Gastrocnemius medialis (tissue), 4 donors: ENCODE measurements at regions of chr14 and their contacts with region 1.

Region 1: DNA sequence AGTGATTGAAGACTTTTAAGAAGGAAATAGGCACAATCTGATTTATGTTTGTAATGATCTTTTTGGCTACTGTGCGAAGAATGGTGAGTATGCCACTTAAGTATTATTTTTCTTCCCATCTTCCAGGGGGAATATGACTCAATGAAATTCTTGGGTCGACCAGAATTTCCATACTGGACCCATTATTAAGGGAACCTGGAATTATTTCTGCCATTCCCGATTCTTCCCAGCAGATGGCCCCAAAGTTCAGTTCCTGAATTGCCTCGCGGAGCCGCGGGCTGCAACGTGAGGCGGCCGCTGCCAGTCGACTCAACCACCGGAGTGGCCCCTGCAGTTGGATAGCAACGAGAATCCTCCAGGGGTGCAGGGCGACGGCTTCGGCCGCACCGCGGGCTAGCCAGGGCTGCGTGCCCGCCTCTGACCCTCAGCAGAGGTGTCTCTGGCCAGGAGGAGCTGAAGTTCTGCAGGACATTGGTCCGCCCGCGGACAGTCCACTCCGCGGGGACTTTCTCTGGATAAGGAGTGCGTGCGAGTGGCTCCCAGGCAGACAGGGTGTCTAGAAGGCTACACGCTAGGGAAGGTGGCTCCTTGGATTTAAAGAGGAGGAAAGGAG is 628 bp upstream of the TSHR start:
- DNase-seq: peak; percentile 59 to 64
- ATAC-seq: peak; percentile 90 to 93
- H3K4me3 ChIP-seq: peak overlapping the region; percentile 61 to 72 (median 68)
- H3K27ac ChIP-seq: no peak overlapping the region
- H3K4me1 ChIP-seq: peaks cover 0 to 7% of the 10 kb centered on the region in 2 donors
- H3K27me3 ChIP-seq: no peaks in the 10 kb centered on the region
- CTCF ChIP-seq: peak; percentile 75 to 88 (median 85)
- POLR2A ChIP-seq: no peak

Region 2: DNA sequence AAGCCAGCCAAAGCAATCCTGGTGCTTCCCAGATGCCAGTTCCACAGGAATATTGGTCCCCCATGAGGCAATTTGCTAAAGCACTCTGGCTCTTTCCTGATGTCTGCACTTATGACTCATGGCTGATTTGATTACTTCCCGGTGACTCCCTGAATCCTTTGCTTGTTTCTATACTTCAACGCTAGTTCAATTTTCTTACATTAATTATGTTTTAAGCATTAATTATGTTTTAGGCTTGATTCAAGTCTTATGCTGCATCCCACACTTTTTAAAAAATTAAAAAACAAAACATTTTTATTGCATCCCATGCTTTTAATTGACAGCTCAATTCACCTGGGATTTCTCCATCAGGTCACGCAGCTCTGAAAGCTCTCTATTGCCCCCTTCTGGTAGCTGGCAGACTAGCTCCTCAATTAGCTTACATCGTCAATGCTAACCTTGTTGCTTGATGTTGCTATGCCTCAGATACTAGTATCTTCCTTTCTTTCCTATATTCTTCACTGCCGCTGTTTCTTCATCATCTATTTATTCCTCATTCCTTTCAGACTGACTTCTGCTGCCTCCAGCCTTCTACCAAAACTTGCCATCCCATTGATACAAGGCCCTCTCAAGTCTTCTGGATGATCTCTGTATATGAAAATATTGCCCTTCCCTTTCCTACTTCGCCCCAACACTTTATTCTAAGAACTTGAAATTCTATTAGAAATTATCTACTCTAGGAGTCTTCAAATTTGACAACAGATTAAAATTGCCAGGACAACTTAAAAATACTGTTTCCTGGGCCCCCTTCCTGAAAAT is 32.6 kb after region 1 on chr14:
- in situ Hi-C with region 1: loop called in 3 of 4 experiments (anchors 5 kb)
- intact Hi-C with region 1: loop called (anchors 1 kb)
- DNase-seq: peak; percentile 36 to 42
- ATAC-seq: peak; percentile 83 to 91
- H3K4me3 ChIP-seq: no peak overlapping the region
- H3K27ac ChIP-seq: no peak overlapping the region
- H3K4me1 ChIP-seq: no peaks in the 10 kb centered on the region
- H3K27me3 ChIP-seq: no peaks in the 10 kb centered on the region
- CTCF ChIP-seq: peak; percentile 82 to 91 (median 88)
- POLR2A ChIP-seq: no peak

Region 3: DNA sequence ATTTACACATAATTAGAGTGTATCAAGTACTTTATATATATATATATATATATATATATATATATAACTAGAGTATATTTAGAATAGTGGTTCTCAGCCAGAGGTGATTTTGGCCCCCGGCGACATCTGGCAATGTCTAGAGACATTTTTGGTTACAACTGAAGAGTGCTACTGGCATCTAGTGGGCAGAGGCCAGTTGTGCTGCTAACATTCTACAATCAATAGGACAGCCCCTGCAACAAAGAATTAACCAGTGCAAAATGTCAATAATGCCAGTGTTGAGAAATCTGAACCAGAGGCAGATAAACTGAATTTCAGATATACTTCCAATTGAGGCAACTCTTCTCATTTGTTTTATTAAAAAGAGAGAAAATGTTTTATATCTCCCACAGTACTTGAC is 257.1 kb after region 1 on chr14:
- in situ Hi-C with region 1: no loop called
- intact Hi-C with region 1: loop called (anchors 2 kb)
- DNase-seq: peak; percentile 22 to 47
- ATAC-seq: peak; percentile 76 to 85
- H3K4me3 ChIP-seq: no peak overlapping the region
- H3K27ac ChIP-seq: peak overlapping the region in 1 of 4 donors; percentile 91
- H3K4me1 ChIP-seq: peaks cover 12 to 29% of the 10 kb centered on the region in 2 donors
- H3K27me3 ChIP-seq: no peaks in the 10 kb centered on the region
- CTCF ChIP-seq: peak in 4 of 5 experiments; percentile 28 to 68 (median 56)
- POLR2A ChIP-seq: no peak